Vagina (tissue), 2 donors: ENCODE measurements at regions of chr1 and their contacts with region 1.

Region 1: GRCh38 chr1:58652651-58653184 is 47.1 kb downstream of the MYSM1 start:
- DNase-seq: no peak
- H3K4me3 ChIP-seq: no peak overlapping the region
- H3K27ac ChIP-seq: no peak overlapping the region
- H3K4me1 ChIP-seq: peaks cover 11% of the 10 kb centered on the region
- H3K27me3 ChIP-seq: no peaks in the 10 kb centered on the region
- CTCF ChIP-seq: peak; percentile 76 to 93 (median 92)
- POLR2A ChIP-seq: no peak

Region 2: GRCh38 chr1:58500043-58500442 is 152.7 kb before region 1 on chr1:
- intact Hi-C with region 1: no loop called
- DNase-seq: no peak
- H3K4me3 ChIP-seq: no peak overlapping the region
- H3K27ac ChIP-seq: no peak overlapping the region
- H3K4me1 ChIP-seq: no peaks in the 10 kb centered on the region
- H3K27me3 ChIP-seq: no peaks in the 10 kb centered on the region
- CTCF ChIP-seq: no peak
- POLR2A ChIP-seq: no peak

Region 3: DNA sequence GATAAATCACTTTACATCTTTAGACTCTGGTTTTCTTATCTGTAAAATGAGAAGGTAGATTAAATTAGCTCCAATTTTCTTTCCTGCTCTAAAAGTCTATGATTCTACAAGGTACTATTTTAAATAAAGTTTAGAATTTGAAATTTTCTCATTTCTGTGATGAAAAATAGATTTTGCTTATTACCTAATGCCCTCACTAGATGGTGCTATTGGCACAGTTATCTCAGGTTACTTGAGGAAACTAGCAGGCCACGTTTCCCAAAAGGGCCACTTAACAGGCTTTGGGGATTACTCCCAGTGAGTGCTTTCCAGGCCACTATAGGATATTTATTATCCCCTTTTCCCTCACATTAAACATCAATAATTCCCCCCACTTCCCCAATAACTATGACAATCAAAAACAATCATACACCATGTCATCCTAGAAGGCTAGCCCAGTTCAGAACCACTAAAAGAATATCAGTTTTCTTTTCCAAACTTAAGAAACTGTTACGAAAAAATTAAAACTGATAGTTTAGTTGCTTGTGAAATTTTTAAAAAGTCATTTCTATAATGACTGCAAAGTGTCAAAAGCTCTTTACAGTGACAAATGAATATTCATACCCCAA is 136.8 kb before region 1 on chr1:
- intact Hi-C with region 1: loop called (anchors 5 kb)
- DNase-seq: no peak
- H3K4me3 ChIP-seq: no peak overlapping the region
- H3K27ac ChIP-seq: no peak overlapping the region
- H3K4me1 ChIP-seq: no peaks in the 10 kb centered on the region
- H3K27me3 ChIP-seq: no peaks in the 10 kb centered on the region
- CTCF ChIP-seq: peak; percentile 55 to 86 (median 63)
- POLR2A ChIP-seq: no peak

Region 4: DNA sequence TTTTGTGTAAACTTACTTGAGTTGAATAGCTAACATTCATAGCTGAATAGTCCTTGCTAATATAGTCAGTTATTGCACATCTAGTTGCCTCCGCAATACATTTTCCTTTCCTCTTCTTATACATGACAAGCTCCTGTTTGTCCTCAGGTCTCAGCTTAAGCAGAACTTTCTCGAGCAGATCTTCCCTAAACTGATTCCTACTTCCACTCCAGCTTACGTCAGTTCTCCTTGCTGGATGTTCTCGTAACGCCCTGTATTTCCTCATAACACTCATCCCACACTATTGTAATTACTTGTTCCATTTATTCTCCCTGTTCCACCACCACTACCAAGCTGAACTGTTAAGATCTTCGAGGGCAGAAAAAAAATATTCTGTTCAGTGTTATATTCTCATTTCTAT is 91.1 kb before region 1 on chr1:
- intact Hi-C with region 1: loop called (anchors 10 kb)
- DNase-seq: no peak
- H3K4me3 ChIP-seq: no peak overlapping the region
- H3K27ac ChIP-seq: no peak overlapping the region
- H3K4me1 ChIP-seq: no peaks in the 10 kb centered on the region
- H3K27me3 ChIP-seq: no peaks in the 10 kb centered on the region
- CTCF ChIP-seq: no peak
- POLR2A ChIP-seq: no peak